Mammary epithelial cell (primary cell): ENCODE measurements at regions of chrX and their contacts with region 1.

Region 1: DNA sequence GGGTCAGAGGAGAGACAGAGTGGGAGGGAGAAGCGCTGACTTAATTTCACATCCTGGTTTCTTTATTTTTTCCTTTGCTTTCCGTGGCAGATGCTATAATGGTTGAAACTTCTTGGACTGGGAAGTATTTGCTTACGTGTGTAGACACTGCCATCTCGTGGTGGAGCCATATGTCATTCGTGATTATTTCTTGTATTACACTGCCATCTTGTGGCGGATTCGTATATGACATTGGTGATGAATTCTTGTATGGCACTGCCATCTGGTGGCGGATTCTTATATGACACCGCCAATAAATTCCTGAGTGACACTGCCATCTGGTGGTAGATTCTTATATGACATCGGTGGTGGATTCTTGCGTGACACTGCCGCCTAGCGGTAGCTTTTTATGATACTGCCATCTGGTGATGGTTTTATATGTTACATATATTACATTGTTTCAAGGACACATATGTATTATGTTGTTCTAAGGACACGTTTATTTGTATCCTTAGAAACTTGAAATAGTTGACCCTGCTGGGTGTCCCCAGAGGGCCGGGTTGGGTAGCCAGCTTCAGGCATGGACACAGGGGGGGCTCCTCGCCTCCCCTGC is 37.3 kb upstream of the CLCN4 start:
- DNase-seq: peak; percentile 58
- H3K4me3 ChIP-seq: no peak overlapping the region
- H3K27ac ChIP-seq: no peak overlapping the region
- H3K4me1 ChIP-seq: no peaks in the 10 kb centered on the region
- H3K27me3 ChIP-seq: no peaks in the 10 kb centered on the region
- CTCF ChIP-seq: peak; percentile 99 to 100

Region 2: GRCh38 chrX:8548446-8548845 is 1571.0 kb before region 1 on chrX:
- CTCF ChIA-PET with region 1: no interaction called
- dilution Hi-C with region 1: no loop called
- in situ Hi-C with region 1: no loop called
- intact Hi-C with region 1: no loop called
- DNase-seq: peak; percentile 70
- H3K4me3 ChIP-seq: no peak overlapping the region
- H3K27ac ChIP-seq: no peak overlapping the region
- H3K4me1 ChIP-seq: peaks cover 5% of the 10 kb centered on the region
- H3K27me3 ChIP-seq: no peaks in the 10 kb centered on the region
- CTCF ChIP-seq: no peak

Region 3: GRCh38 chrX:9885150-9885549 is 234.3 kb before region 1 on chrX:
- CTCF ChIA-PET with region 1: interaction called, 7 read pairs
- dilution Hi-C with region 1: no loop called
- in situ Hi-C with region 1: loop called in 1 of 2 experiments (anchors 25 kb)
- intact Hi-C with region 1: loop called (anchors 1 kb)
- DNase-seq: no peak
- H3K4me3 ChIP-seq: no peak overlapping the region
- H3K27ac ChIP-seq: no peak overlapping the region
- H3K4me1 ChIP-seq: no peaks in the 10 kb centered on the region
- H3K27me3 ChIP-seq: peaks cover 5% of the 10 kb centered on the region
- CTCF ChIP-seq: peak; percentile 44 to 79

Region 4: DNA sequence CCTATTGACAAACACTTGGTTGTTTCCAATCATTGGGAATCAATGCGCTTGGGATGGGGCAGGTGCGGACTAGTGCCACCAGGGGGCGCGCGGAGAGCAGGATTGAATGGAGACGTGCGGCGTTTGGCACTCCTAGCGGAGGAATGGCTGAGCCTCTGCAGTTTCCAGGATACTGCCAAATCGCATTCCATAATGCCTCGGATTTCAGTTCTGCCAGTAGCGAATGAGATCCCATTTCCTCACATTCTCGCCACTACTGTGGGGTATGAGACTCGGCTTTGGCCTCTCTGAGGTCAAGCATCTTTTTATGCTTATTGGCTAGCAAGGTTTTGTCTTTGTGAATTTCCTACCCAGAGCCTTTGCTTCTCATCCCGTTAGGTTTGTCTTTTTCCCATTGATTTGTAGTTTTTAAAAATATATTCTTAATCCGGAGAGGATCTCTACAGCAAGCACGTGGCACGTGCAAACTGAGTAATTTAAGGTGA is 123.6 kb before region 1 on chrX:
- CTCF ChIA-PET with region 1: no interaction called
- dilution Hi-C with region 1: no loop called
- in situ Hi-C with region 1: loop called in 1 of 2 experiments (anchors 5 kb)
- intact Hi-C with region 1: loop called (anchors 1 kb)
- DNase-seq: peak; percentile 47
- H3K4me3 ChIP-seq: no peak overlapping the region
- H3K27ac ChIP-seq: no peak overlapping the region
- H3K4me1 ChIP-seq: no peaks in the 10 kb centered on the region
- H3K27me3 ChIP-seq: no peaks in the 10 kb centered on the region
- CTCF ChIP-seq: peak; percentile 78 to 90

Region 5: GRCh38 chrX:10014462-10015356 is 104.8 kb before region 1 on chrX:
- CTCF ChIA-PET with region 1: interaction called, 3 read pairs
- dilution Hi-C with region 1: no loop called
- in situ Hi-C with region 1: no loop called
- intact Hi-C with region 1: loop called (anchors 1 kb)
- DNase-seq: peak; percentile 77
- H3K4me3 ChIP-seq: peak overlapping the region; percentile 38 to 58 (median 52)
- H3K27ac ChIP-seq: peak overlapping the region; percentile 3
- H3K4me1 ChIP-seq: peaks cover 16% of the 10 kb centered on the region
- H3K27me3 ChIP-seq: peaks cover 3% of the 10 kb centered on the region
- CTCF ChIP-seq: no peak

Region 6: DNA sequence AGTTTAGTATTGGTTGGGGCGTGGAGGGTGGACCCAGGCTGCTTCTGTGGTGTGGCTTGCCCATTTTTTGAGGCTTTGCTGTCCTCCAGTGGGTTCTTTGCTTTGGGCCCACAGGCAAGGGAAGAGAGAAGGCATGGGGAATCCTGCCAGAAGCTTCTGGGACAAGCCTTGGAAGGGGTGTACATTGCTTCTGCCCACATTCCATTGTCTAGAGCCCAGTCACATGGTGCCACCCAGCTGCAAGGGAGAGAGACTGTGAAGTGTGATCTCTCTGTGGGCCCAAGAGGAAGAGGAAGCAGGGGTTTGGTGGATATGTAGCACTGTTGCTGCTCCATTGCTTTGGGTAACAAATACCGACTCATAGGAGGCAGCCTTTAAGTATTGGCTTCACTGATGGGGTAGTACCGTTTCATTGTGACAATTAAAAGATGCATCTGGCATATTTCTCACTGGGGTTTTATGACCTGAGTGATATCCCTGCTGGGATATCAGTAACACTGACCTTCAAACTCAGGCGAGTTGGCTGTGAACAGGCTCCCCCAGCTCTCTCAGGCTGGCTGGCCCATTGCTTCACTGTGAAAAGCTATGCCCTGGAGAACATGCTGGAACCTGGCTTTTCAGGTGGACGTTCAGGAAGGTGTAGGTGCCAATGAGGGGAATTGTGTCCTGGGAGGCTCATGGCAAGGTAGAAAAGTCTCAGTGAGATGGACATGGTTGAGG is 66.4 kb before region 1 on chrX:
- CTCF ChIA-PET with region 1: no interaction called
- dilution Hi-C with region 1: no loop called
- in situ Hi-C with region 1: no loop called
- intact Hi-C with region 1: loop called (anchors 10 kb)
- DNase-seq: no peak
- H3K4me3 ChIP-seq: no peak overlapping the region
- H3K27ac ChIP-seq: no peak overlapping the region
- H3K4me1 ChIP-seq: peaks cover 52% of the 10 kb centered on the region
- H3K27me3 ChIP-seq: no peaks in the 10 kb centered on the region
- CTCF ChIP-seq: no peak

Region 7: GRCh38 chrX:10071451-10072144 is 47.9 kb before region 1 on chrX:
- CTCF ChIA-PET with region 1: no interaction called
- dilution Hi-C with region 1: no loop called
- in situ Hi-C with region 1: no loop called
- intact Hi-C with region 1: loop called (anchors 1 kb)
- DNase-seq: no peak
- H3K4me3 ChIP-seq: no peak overlapping the region
- H3K27ac ChIP-seq: no peak overlapping the region
- H3K4me1 ChIP-seq: peaks cover 19% of the 10 kb centered on the region
- H3K27me3 ChIP-seq: no peaks in the 10 kb centered on the region
- CTCF ChIP-seq: no peak